A673 (cell line): ENCODE measurements at regions of chr14 and their contacts with region 1.

Region 1: GRCh38 chr14:49461529-49462401 is 124.4 kb downstream of the RPS29 start:
- DNase-seq: peak; percentile 86
- H3K4me3 ChIP-seq: no peak overlapping the region
- H3K27ac ChIP-seq: no peak overlapping the region
- H3K4me1 ChIP-seq: no peaks in the 10 kb centered on the region
- H3K27me3 ChIP-seq: no peaks in the 10 kb centered on the region
- CTCF ChIP-seq: peak; percentile 87

Region 2: GRCh38 chr14:49405291-49405690 is 56.5 kb before region 1 on chr14:
- CTCF ChIA-PET with region 1: no interaction called
- POLR2A ChIA-PET with region 1: no interaction called
- intact Hi-C with region 1: no loop called
- DNase-seq: no peak
- H3K4me3 ChIP-seq: no peak overlapping the region
- H3K27ac ChIP-seq: no peak overlapping the region
- H3K4me1 ChIP-seq: no peaks in the 10 kb centered on the region
- H3K27me3 ChIP-seq: no peaks in the 10 kb centered on the region
- CTCF ChIP-seq: no peak

Region 3: DNA sequence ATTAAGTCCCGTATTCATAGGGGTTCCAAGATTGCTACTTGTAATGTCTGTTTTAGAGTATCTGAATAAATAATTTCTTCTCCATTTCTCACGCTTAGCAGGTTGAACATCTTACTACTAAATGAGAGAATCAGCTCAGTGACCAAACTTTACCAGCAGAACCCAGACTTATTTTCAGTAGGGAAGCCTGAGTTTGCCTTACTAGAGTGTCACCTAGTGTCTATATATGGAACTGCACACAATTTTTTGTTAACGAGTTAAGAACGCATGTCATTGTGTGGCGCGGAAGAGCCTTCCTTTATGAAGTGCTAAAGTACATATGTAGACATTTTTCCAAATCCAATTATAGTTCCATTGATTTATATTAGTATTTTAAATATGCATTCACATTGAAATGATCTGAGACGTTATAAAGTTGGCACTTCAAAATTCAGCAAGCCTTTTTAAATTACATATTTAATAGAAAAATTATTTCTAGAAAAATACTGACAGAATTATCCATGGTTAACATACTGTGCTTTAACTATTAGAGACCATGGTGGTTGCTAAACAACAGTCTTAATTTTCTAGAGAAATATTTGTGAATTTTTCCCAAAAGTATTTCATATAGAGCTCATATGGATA is 36.1 kb after region 1 on chr14:
- CTCF ChIA-PET with region 1: interaction called, 23 read pairs
- POLR2A ChIA-PET with region 1: no interaction called
- intact Hi-C with region 1: loop called (anchors 5 kb)
- DNase-seq: peak; percentile 86
- H3K4me3 ChIP-seq: no peak overlapping the region
- H3K27ac ChIP-seq: no peak overlapping the region
- H3K4me1 ChIP-seq: no peaks in the 10 kb centered on the region
- H3K27me3 ChIP-seq: peaks cover 12% of the 10 kb centered on the region
- CTCF ChIP-seq: peak; percentile 89

Region 4: DNA sequence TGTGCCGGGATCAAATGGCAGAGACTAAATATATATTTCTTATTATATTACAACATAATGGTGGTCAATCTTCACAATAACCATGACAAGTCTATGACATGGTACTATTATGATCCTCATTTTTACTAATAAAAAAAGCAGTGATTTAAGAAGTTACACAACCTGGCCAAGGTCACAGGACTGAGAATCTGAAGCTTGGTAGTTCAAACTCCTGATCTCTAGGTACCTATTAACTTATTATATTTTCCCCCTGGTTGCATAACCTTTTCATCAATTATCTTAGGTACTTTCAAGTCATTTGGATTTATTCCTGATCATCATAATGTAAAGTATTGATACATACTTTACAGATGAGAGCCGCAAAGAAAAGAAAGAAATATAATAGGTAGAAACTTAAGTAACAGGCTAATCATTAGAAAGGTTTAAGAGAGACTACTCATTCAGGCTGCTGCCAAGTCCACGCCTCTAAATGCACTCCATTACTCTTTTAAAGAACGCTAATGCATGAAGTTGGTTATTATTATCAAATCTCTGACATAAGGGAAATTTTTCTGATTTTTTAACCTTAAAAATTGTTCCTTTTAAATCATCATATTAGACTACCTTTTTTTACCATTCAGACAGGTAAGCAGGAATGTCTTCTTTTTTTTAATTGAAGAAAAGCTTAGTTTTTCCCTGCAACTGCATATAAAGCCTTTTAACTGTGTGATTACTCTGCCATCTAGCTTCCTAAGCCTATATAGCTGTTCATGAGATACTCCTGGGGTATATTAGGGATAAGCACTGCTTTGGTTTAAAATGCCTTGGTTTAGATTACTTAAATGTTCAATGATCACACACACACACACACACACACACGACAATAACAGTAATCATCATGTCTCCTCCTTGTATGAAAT is 88.8 kb after region 1 on chr14:
- CTCF ChIA-PET with region 1: interaction called, 5 read pairs
- POLR2A ChIA-PET with region 1: no interaction called
- intact Hi-C with region 1: loop called (anchors 2 kb)
- DNase-seq: peak; percentile 12
- H3K4me3 ChIP-seq: no peak overlapping the region
- H3K27ac ChIP-seq: no peak overlapping the region
- H3K4me1 ChIP-seq: no peaks in the 10 kb centered on the region
- H3K27me3 ChIP-seq: no peaks in the 10 kb centered on the region
- CTCF ChIP-seq: peak; percentile 52

Region 5: GRCh38 chr14:49754570-49755097 is 292.9 kb after region 1 on chr14:
- CTCF ChIA-PET with region 1: no interaction called
- POLR2A ChIA-PET with region 1: no interaction called
- intact Hi-C with region 1: no loop called
- DNase-seq: no peak
- H3K4me3 ChIP-seq: no peak overlapping the region
- H3K27ac ChIP-seq: no peak overlapping the region
- H3K4me1 ChIP-seq: no peaks in the 10 kb centered on the region
- H3K27me3 ChIP-seq: no peaks in the 10 kb centered on the region
- CTCF ChIP-seq: no peak